Ascending aorta (tissue), 2 donors: ENCODE measurements at regions of chr15 and their contacts with region 1.

Region 1: DNA sequence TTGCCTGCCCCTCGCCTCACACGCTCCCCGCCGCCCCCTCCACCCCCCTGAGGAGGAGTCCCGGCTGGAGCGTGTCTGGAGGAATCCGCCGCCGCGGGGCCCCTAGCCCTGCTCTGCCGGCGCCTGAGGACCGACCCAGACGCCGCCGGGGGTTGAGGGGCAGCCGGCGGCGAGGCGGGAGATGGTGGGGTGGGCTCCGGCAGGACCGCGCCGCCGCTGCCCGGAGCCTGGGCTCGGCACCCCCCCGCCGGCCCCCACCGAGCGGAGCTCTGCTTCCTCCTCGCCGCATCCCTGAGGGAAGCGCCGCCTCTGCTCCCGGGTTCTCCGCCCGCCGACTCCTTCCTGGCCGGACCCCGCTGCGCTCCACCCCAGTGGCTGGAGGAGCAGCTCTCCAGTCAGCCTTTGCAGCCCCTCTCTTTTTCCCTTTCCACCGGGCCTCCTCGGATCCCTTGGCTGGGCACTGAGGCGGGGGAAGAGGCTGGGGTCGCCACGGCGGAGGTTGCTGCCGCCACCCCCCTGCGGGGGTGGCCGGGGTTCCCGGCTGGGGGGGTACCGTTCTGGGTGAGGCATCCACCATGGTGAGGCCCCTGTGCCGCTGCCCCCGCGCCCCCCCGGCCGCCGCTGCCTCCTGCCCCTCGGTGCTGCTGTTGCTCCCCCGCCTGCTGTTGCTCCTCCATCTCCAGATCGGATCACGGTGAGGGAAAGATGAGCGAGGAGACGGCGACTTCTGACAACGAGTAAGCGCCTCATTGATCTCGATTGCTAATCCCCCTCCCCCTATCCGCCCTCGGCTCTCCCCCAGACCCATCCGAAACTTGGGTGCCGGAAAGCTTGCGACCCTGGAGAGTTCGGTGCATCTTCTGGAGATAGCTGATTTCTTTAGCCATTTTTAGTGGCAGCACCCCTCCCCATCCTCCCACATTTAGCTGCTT is at the start of gene SPRED1:
- DNase-seq: peak in 1 of 2 donors; percentile 86
- H3K4me3 ChIP-seq: peak within 1 kb of the TSS; percentile 90 to 95
- H3K27ac ChIP-seq: peak within 1 kb of the TSS; percentile 99 to 100
- H3K4me1 ChIP-seq: peaks cover 0 to 14% of the 10 kb centered on the region in 2 donors
- H3K27me3 ChIP-seq: no peaks in the 10 kb centered on the region
- CTCF ChIP-seq: no peak
- total RNA-seq, gene SPRED1: 9.4 TPM

Region 2: DNA sequence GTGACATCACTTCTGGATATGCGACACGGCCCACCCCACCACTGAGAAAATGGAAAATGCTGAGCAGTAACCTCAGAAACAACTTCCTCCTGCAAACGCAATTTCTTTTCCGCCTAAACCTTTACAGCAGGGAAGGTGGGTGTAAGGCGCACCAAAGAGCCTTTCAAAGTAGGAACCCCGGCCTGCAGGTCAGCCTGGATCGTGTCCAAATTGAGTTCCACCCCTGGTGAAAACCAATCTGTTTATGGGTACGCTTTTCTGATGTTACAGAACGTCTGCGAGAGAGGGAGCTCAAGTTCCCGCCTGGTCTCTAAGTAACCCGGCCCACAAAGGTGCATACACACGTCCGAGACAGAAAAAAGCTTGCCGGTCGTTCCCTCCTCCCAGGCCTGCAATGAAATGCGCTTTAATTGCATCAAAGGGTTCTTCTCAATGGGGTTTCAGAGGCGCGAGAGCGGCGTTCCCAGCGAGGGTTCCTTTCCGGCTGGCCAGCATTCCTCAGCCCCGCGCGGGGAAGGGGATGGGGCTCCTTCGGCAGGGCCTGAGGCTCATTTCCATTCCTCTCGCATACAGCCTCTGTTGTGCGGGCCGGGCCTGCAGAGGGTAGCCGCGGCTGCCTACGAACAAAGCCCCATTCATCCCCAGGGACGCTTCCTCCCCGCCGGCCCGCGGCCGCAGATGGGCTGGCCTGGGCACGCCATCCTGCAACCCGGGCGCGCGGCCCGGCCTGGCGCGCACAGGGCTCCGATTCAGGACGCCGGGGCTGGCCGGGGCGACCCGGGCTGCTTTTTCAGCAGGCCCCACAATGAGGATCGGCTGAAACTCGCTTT is 180.2 kb before region 1 on chr15:
- intact Hi-C with region 1: loop called (anchors 2 kb)
- DNase-seq: peak in 1 of 2 donors; percentile 83
- H3K4me3 ChIP-seq: peak overlapping the region; percentile 56 to 79
- H3K27ac ChIP-seq: peak overlapping the region; percentile 94 to 95
- H3K4me1 ChIP-seq: peaks cover 0 to 22% of the 10 kb centered on the region in 2 donors
- H3K27me3 ChIP-seq: no peaks in the 10 kb centered on the region
- CTCF ChIP-seq: peak in 1 of 3 experiments; percentile 28

Region 3: GRCh38 chr15:38145651-38146111 is 107.1 kb before region 1 on chr15:
- intact Hi-C with region 1: no loop called
- DNase-seq: no peak
- H3K4me3 ChIP-seq: no peak overlapping the region
- H3K27ac ChIP-seq: no peak overlapping the region
- H3K4me1 ChIP-seq: no peaks in the 10 kb centered on the region
- H3K27me3 ChIP-seq: no peaks in the 10 kb centered on the region
- CTCF ChIP-seq: no peak

Region 4: DNA sequence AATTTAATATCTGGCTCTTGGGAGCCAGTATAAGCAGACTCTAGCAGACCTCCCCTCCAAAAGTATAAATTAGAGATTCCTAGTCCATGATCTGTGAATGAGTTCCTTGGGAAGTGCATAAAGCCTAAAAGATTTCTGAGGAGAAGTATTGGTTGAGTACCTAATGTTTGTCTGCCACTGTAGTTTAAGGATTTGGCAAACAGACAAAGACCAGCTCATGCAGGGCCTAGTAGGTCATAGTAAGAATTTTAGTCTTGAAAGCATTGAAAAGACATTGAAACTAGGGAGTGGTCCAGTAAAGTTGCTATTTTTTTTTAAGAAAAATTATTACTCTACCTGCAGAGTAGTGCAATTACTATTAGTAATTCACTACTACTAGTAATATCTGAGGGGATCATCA is 67.4 kb after region 1 on chr15:
- intact Hi-C with region 1: loop called (anchors 5 kb)
- DNase-seq: no peak
- H3K4me3 ChIP-seq: no peak overlapping the region
- H3K27ac ChIP-seq: no peak overlapping the region
- H3K4me1 ChIP-seq: peaks cover 0 to 9% of the 10 kb centered on the region in 2 donors
- H3K27me3 ChIP-seq: no peaks in the 10 kb centered on the region
- CTCF ChIP-seq: no peak

Region 5: DNA sequence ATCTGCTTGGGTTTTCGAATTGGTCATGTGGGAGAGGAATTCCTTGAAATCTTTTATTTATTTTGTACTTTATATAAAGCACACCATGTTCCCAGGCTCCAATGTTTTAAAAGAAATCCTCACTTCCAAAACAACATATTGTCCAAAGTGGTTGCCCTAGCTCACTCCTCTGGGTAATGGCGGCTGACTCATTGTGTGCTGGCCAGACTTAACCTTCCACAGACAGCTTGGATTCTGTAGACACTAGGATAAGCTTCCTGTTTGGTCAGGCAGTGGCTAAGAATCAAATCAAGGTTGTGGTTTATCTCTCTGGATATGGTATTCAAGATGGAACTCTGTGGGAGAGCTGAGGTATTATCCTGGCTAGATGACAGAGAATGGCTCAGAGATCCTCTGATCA is 145.4 kb after region 1 on chr15:
- intact Hi-C with region 1: loop called (anchors 2 kb)
- DNase-seq: peak; percentile 20 to 83
- H3K4me3 ChIP-seq: no peak overlapping the region
- H3K27ac ChIP-seq: peak overlapping the region; percentile 44 to 65
- H3K4me1 ChIP-seq: peaks cover 3 to 16% of the 10 kb centered on the region in 2 donors
- H3K27me3 ChIP-seq: no peaks in the 10 kb centered on the region
- CTCF ChIP-seq: no peak

Region 6: GRCh38 chr15:38453971-38454695 is 201.4 kb after region 1 on chr15 and contains the start of gene FAM98B:
- intact Hi-C with region 1: loop called (anchors 1 kb)
- DNase-seq: peak; percentile 36 to 92
- H3K4me3 ChIP-seq: peak within 1 kb of the TSS; percentile 84 to 86
- H3K27ac ChIP-seq: peak within 1 kb of the TSS; percentile 92 to 95
- H3K4me1 ChIP-seq: peaks cover 0 to 7% of the 10 kb centered on the region in 2 donors
- H3K27me3 ChIP-seq: no peaks in the 10 kb centered on the region
- CTCF ChIP-seq: no peak
- total RNA-seq, gene FAM98B: 6.4 TPM